HCT116 (cell line): ENCODE measurements at regions of chr14 and their contacts with region 1.

Region 1: GRCh38 chr14:29548948-29549370 is 378.7 kb downstream of the PRKD1 start:
- DNase-seq: peak; percentile 12
- ATAC-seq: peak; percentile 44
- H3K4me3 ChIP-seq: no peak overlapping the region
- H3K27ac ChIP-seq: no peak overlapping the region
- H3K4me1 ChIP-seq: no peaks in the 10 kb centered on the region
- H3K27me3 ChIP-seq: no peaks in the 10 kb centered on the region
- CTCF ChIP-seq: peak in 2 of 3 experiments; percentile 25 to 37; a peak in 1 of 6 replicates
- POLR2A ChIP-seq: no peak
- RAD21 ChIP-seq: 0 out of 2 replicates have a peak, but pooled peaks have one; percentile 8

Region 2: DNA sequence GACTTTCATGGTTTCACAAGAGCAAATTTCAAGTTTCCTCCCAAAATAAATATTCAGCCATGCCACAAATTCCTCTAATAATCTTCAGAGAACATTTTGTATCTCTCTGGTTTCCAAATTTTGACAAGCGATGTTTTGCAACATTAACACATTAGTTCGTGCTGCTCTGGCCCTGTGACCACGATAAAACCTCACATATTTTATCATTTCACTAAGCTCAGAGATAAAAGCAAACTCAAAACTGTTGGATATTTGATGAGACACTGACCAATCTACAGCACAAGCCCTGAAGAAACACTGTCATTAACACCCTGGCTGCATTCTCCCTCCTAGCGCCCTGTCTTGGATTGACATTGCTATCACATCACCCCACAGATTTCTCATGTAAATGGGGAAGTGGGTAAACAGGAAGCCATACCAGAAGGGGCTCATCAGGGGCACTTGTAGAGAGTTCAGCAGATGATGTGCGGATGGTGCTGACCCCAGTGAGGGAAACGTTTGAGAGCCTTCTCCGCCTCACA is 114.4 kb after region 1 on chr14:
- CTCF ChIA-PET with region 1: no interaction called
- POLR2A ChIA-PET with region 1: no interaction called
- RAD21 ChIA-PET with region 1: no interaction called
- intact Hi-C with region 1: no loop called
- DNase-seq: no peak
- ATAC-seq: no peak
- H3K4me3 ChIP-seq: no peak overlapping the region
- H3K27ac ChIP-seq: no peak overlapping the region
- H3K4me1 ChIP-seq: no peaks in the 10 kb centered on the region
- H3K27me3 ChIP-seq: no peaks in the 10 kb centered on the region
- CTCF ChIP-seq: no peak
- POLR2A ChIP-seq: no peak
- RAD21 ChIP-seq: no peak

Region 3: DNA sequence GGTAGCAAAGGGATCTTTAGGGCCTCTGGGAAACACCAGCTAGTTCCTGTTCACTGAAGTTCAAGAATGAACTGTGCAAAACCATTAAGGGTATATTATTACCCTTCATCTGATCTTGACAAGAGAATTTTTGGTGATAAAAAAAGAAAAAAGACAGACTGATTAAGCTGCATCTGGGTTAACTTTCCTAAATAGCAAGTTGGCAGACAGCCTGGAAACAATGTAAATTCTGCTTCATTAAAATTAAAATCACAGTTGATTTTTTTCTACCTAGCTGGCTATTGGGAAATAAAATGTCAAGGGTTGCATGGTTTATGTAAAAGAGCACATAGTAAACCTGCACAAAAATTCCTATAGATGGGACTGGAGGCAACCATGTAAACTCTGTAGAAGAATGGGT is 505.2 kb after region 1 on chr14:
- CTCF ChIA-PET with region 1: no interaction called
- POLR2A ChIA-PET with region 1: no interaction called
- RAD21 ChIA-PET with region 1: no interaction called
- intact Hi-C with region 1: no loop called
- DNase-seq: no peak
- ATAC-seq: no peak
- H3K4me3 ChIP-seq: no peak overlapping the region
- H3K27ac ChIP-seq: no peak overlapping the region
- H3K4me1 ChIP-seq: no peaks in the 10 kb centered on the region
- H3K27me3 ChIP-seq: no peaks in the 10 kb centered on the region
- CTCF ChIP-seq: no peak
- POLR2A ChIP-seq: no peak
- RAD21 ChIP-seq: no peak

Region 4: DNA sequence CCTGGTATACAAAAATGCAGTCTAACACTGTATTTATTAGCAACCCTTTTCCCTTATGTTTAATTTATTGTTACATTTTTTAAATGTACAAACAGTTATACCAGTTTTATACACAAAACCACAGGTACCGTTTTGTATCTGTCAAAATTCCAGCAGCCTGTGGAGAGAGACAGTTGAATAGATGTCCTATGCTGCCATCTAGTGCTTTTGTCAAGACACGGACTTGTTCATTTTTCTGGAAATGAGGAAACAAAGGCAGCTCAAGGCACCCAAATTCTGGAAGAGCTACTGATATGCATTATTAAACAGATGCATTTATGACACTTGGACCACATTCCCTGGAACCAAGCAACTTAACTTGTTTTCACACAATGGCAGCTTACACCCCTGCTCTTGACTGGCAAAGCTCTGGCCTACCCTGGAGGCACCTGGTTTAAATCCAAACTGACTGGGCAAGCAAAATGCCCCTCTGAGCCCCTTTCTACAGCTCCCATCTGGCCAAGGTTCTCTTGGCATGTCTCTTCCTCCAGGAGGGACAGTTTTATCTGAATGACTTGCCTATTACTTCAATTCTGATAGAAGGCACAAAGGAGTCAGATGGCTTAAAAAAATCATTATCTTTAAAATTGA is 665.6 kb after region 1 on chr14:
- CTCF ChIA-PET with region 1: no interaction called
- POLR2A ChIA-PET with region 1: no interaction called
- RAD21 ChIA-PET with region 1: no interaction called
- intact Hi-C with region 1: loop called (anchors 5 kb)
- DNase-seq: peak; percentile 8
- ATAC-seq: no peak
- H3K4me3 ChIP-seq: no peak overlapping the region
- H3K27ac ChIP-seq: no peak overlapping the region
- H3K4me1 ChIP-seq: no peaks in the 10 kb centered on the region
- H3K27me3 ChIP-seq: no peaks in the 10 kb centered on the region
- CTCF ChIP-seq: peak in 2 of 3 experiments; percentile 38 to 57; a peak in 4 of 6 replicates
- POLR2A ChIP-seq: no peak
- RAD21 ChIP-seq: peak; percentile 38; the same call in 1 of the 2 replicates

Region 5: GRCh38 chr14:30270200-30271161 is 721.5 kb after region 1 on chr14:
- CTCF ChIA-PET with region 1: no interaction called
- POLR2A ChIA-PET with region 1: no interaction called
- RAD21 ChIA-PET with region 1: no interaction called
- intact Hi-C with region 1: loop called (anchors 10 kb)
- DNase-seq: peak; percentile 55
- ATAC-seq: peak; percentile 99
- H3K4me3 ChIP-seq: no peak overlapping the region
- H3K27ac ChIP-seq: no peak overlapping the region
- H3K4me1 ChIP-seq: no peaks in the 10 kb centered on the region
- H3K27me3 ChIP-seq: no peaks in the 10 kb centered on the region
- CTCF ChIP-seq: peak in 2 of 3 experiments; percentile 85 to 93; a peak in 4 of 6 replicates
- POLR2A ChIP-seq: no peak
- RAD21 ChIP-seq: peak; percentile 34; the same call in 1 of the 2 replicates

Region 6: GRCh38 chr14:30443368-30444007 is 894.5 kb after region 1 on chr14:
- CTCF ChIA-PET with region 1: no interaction called
- POLR2A ChIA-PET with region 1: no interaction called
- RAD21 ChIA-PET with region 1: no interaction called
- intact Hi-C with region 1: loop called (anchors 5 kb)
- DNase-seq: peak; percentile 16
- ATAC-seq: 0 out of 2 replicates have a peak, but pooled peaks have one; percentile 53
- H3K4me3 ChIP-seq: no peak overlapping the region
- H3K27ac ChIP-seq: no peak overlapping the region
- H3K4me1 ChIP-seq: no peaks in the 10 kb centered on the region
- H3K27me3 ChIP-seq: peaks cover 34% of the 10 kb centered on the region
- CTCF ChIP-seq: peak; percentile 25 to 66 (median 48); a peak in 5 of 6 replicates
- POLR2A ChIP-seq: no peak
- RAD21 ChIP-seq: peak; percentile 63